ENCODE measurements at regions of chr1 and their contacts with region 1.

Region 1: GRCh38 chr1:226309316-226310053 is 521 bp upstream of the LIN9 start:
- DNase-seq: no peak
- H3K4me3 ChIP-seq: peak overlapping the region; percentile 61 to 100 (median 89)
- H3K27ac ChIP-seq: peak overlapping the region; percentile 38
- H3K4me1 ChIP-seq: peaks cover 23% of the 10 kb centered on the region
- H3K27me3 ChIP-seq: no peaks in the 10 kb centered on the region
- CTCF ChIP-seq: peak in 1 of 2 donors; percentile 22

Region 2: GRCh38 chr1:226384717-226385116 is 75.2 kb after region 1 on chr1:
- CTCF ChIA-PET with region 1: no interaction called
- dilution Hi-C with region 1: loop called (anchors 5 kb)
- in situ Hi-C with region 1: no loop called
- intact Hi-C with region 1: no loop called
- DNase-seq: no peak
- H3K4me3 ChIP-seq: no peak overlapping the region
- H3K27ac ChIP-seq: no peak overlapping the region
- H3K4me1 ChIP-seq: no peaks in the 10 kb centered on the region
- H3K27me3 ChIP-seq: no peaks in the 10 kb centered on the region
- CTCF ChIP-seq: no peak